GM12878 (cell line): ENCODE measurements at regions of chr20 and their contacts with region 1.

Region 1: DNA sequence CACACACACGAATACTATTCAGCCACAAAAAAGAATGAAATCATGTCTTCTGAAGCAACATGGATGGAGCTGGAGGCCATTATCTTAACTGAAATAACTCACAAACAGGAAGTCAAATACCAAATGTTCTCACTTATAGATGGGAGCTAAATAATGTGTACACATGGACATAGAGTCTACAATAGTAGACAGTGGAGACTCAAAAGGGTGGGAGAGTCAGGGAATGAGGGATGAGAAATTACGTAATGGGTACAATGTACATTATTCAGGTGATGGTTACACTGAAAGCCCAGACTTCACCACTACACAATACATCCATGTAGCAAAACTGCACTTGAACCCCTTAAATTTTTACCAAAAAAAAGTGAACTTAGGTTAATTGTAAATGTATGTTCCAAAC is 160.4 kb downstream of the TASP1 start:
- DNase-seq: no peak
- ATAC-seq: no peak
- H3K4me3 ChIP-seq: no peak overlapping the region
- H3K27ac ChIP-seq: no peak overlapping the region
- H3K4me1 ChIP-seq: no peaks in the 10 kb centered on the region
- H3K27me3 ChIP-seq: no peaks in the 10 kb centered on the region
- CTCF ChIP-seq: no peak
- EP300 ChIP-seq: no peak
- POLR2A ChIP-seq: no peak
- RAD21 ChIP-seq: no peak

Region 2: GRCh38 chr20:13458860-13459451 is 19.4 kb before region 1 on chr20:
- CTCF ChIA-PET with region 1: interaction called, 13 read pairs
- POLR2A ChIA-PET with region 1: no interaction called
- RAD21 ChIA-PET with region 1: no interaction called
- SMC1A ChIA-PET with region 1: interaction called, 3 read pairs
- in situ Hi-C with region 1: no loop called
- intact Hi-C with region 1: no loop called
- DNase-seq: no peak
- ATAC-seq: peak; percentile 91
- H3K4me3 ChIP-seq: no peak overlapping the region
- H3K27ac ChIP-seq: no peak overlapping the region
- H3K4me1 ChIP-seq: no peaks in the 10 kb centered on the region
- H3K27me3 ChIP-seq: no peaks in the 10 kb centered on the region
- CTCF ChIP-seq: peak; percentile 72 to 89 (median 89)
- EP300 ChIP-seq: no peak
- POLR2A ChIP-seq: no peak
- RAD21 ChIP-seq: peak; percentile 74